Spleen (tissue), 13 donors: ENCODE measurements at regions of chr2 and their contacts with region 1.

Region 1: DNA sequence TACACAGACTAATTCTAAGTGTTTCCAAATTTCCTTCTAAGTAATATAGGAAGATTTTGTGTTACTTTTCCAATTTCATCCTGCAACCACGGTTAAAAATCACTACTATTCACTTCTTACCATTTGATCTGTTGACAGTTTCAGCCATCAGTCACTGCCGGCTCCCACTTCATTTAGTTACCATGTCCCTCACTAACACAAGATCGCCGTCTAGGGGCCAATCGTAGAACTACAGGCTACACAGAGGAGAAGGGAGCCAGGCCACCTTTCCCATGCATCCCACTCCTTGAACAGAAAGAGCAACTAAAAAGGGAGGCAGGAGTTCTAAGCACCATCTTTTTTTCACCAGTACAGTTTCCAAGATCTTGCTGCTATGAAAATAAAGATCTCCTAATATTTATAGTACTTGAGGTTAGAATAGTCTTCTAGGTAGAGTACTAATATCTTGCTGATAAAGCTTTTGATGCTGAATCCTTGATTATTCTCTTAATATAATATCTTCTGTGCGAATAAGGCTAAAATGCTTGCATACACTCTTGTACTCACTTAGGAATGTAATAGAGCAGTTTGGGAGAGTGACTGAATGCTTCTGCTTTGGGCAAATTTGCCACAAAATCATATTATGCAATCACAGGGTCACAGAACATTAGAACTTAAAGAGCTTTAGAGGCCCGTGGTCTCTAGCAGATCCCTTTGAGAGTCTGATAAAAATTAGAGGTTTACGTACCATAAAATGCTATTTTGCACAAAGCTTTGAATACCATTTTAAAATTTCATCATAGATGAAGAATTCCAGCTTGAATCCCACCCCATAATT is 39.5 kb upstream of the CYP1B1 start:
- DNase-seq: peak; percentile 84
- H3K4me3 ChIP-seq: no peak overlapping the region
- H3K27ac ChIP-seq: peak overlapping the region in 6 of 8 donors; percentile 0 to 70 (median 61)
- H3K4me1 ChIP-seq: peaks cover 0 to 40% (median 19%) of the 10 kb centered on the region in 6 donors
- H3K27me3 ChIP-seq: no peaks in the 10 kb centered on the region
- CTCF ChIP-seq: peak; percentile 69 to 94 (median 88)
- POLR2A ChIP-seq: no peak

Region 2: DNA sequence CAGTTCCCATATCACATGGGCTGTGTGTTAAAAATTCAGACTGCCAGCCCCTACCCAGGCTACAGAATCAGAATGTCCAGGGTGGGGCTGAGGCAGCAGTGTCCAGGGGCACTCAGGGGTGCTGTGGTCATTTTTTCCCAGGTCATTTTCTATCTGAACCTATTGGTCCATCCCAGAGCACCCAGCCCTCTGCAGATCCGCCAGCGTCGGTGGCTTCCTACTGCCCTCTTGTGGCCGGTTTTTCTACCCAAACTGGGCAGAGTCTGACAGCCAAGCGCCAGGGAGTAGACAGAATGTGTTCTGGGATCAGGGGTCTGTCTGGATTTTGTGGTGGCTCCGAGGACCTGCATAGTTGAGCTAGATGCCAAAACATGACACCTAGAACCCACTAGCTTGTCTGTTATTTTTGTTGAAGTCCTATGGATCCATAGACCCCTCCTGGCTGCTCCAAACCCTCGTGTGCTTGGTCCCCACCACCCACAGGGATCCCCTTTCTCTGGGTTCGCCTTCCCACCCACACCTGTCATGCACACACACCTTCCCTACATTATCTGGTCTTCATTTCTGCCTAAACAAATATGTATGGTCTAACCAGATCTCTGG is 224.4 kb before region 1 on chr2:
- intact Hi-C with region 1: loop called (anchors 10 kb)
- DNase-seq: peak; percentile 90
- H3K4me3 ChIP-seq: no peak overlapping the region
- H3K27ac ChIP-seq: no peak overlapping the region
- H3K4me1 ChIP-seq: peaks cover 15 to 51% (median 38%) of the 10 kb centered on the region in 6 donors
- H3K27me3 ChIP-seq: no peaks in the 10 kb centered on the region
- CTCF ChIP-seq: peak; percentile 25 to 89 (median 70)
- POLR2A ChIP-seq: no peak

Region 3: GRCh38 chr2:37993143-37993542 is 122.3 kb before region 1 on chr2:
- intact Hi-C with region 1: loop called (anchors 10 kb)
- DNase-seq: no peak
- H3K4me3 ChIP-seq: no peak overlapping the region
- H3K27ac ChIP-seq: no peak overlapping the region
- H3K4me1 ChIP-seq: no peaks in the 10 kb centered on the region
- H3K27me3 ChIP-seq: no peaks in the 10 kb centered on the region
- CTCF ChIP-seq: no peak
- POLR2A ChIP-seq: no peak